Activated B cell treated with CpG ODN at 0.5 μM for 24 hours (primary cell): ENCODE measurements at regions of chr4 and their contacts with region 1.

Region 1: DNA sequence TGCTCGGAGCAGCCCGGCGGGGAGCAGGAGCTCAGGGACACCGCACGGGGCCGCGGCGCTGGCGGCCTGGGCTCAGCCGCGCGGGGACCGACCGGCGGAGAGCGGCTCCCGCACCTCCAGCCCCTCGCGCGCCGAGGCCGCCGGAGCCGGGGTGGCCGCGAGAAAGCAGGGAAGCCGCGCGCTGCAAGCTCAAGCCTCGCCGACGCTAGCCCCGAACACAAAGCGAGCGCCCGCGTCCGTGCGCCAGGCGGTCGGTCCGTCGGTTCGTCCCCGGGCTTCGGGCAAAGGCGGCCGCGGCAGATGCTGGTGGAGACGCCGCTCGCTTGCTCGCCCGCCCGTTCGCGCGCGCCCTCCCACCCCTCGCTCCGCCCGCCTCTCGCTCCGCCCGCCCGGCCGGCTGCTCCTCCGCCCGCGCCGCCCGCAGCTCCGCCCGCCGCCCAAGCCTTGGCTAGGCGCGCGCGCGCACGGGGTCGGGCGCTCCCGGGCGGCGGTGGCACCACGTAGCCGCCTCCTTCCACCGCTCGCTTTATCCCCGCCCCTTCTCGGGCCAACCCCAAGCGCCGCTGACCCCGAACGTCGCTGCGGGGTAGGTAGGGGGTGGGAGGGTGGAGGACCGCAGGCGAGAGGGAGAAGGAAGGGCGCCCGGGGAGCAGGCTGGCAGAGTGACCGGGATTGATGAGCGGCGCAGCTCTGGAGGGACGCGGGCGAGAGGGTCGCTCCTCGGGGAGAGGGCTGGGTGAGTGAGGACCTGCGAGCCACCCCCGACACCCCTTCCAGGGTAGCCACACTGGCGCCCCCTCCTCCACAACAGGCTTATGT is at the start of gene TSPAN5:
- DNase-seq: peak; percentile 78
- ATAC-seq: peak; percentile 86
- H3K4me3 Mint-ChIP-seq: peak within 1 kb of the TSS; percentile 92
- H3K27ac Mint-ChIP-seq: peak within 1 kb of the TSS; percentile 68
- H3K4me1 Mint-ChIP-seq: peaks cover 51% of the 10 kb centered on the region
- H3K27me3 Mint-ChIP-seq: peaks cover 7% of the 10 kb centered on the region
- CTCF ChIP-seq: no peak
- total RNA-seq, gene TSPAN5: 1.6 and 2.7 TPM in 2 replicates

Region 2: DNA sequence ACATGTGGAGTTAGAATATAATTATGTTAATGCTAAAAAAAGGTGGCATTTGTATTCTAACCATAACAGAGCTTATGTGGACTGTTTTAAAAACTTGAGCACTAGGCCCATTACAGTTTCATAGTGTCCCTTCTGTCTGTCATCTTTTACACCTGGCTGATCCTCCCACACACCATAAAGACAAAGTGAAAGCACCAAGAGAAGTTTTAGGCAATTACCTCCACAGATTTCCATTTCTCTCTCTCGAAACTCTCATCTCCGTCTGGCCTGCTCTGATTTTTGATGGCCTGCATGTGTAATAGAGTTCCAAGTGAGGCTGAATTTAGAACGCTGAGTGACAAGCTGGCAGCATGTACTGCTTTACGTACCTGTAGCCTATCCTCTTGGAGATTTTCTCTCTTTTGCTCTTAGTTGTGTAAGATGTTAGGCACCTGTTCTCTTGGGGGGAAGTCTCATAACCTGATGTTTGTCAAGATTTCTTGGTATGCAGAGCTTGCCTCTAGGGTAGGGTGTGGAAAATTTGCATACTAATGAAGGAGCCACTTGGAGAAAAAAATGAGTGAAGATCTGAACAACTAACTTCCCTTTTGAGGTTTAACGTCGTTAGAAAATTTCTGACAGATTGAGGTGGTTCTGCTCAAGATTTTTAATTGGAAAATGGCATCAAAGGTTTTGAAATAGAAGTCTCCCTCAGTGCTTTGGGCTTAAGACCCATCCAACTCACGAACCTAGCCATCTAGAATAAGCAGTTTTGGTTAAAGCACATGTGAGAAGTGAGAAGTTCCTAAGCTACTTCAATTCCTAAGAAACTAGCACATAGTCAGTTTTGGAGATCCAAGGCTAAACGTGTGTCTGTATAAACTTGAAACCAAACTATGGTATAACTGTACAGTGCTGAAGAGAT is 454.9 kb before region 1 on chr4:
- CTCF ChIA-PET with region 1: no interaction called
- POLR2A ChIA-PET with region 1: interaction called, 3 read pairs
- intact Hi-C with region 1: loop called (anchors 5 kb)
- DNase-seq: no peak
- ATAC-seq: peak; percentile 82
- H3K4me3 Mint-ChIP-seq: peak overlapping the region; percentile 62
- H3K27ac Mint-ChIP-seq: peak overlapping the region; percentile 86
- H3K4me1 Mint-ChIP-seq: peaks cover 37% of the 10 kb centered on the region
- H3K27me3 Mint-ChIP-seq: no peaks in the 10 kb centered on the region
- CTCF ChIP-seq: no peak

Region 3: DNA sequence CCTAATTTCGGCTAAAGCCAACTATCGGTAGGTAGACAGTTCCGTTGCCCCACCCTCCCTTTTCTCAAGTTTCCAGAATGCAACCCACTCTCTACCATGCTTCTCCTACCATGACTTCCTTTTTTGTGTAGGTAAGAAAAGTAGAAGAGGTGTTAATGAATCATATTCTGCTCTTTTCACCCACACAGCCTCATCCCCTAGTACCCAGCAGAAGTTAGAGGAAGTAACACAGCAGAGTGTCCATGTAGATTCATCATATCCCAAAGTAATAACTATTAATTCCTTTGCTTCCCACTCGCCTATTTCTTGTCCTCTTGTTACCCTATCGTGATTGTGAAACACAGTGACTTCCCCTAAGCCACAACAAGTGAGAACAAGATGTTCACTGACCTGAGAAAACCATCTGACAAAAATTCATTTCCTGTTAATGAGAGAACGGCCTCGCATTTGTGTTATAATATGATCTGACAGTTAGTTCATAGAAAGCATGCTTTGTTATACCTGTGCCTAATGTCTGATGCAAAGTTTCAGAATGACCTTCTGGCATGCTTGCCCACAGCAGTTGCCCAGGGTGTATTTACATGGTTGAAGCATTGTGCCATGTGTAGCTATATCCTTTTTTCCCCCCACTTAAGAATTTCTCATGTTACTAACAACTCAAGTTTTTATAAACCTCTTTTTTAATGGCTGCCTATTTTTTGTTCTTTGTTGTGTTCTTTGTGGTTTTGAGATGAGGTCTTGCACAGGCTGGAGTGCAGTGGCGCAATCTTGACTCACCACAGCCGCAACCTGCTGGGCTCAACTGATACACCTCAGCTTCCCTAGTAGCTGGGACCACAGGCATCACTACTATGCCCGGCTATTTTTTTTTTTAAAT is 211.8 kb before region 1 on chr4:
- CTCF ChIA-PET with region 1: no interaction called
- POLR2A ChIA-PET with region 1: no interaction called
- intact Hi-C with region 1: loop called (anchors 1 kb)
- DNase-seq: no peak
- ATAC-seq: peak; percentile 67
- H3K4me3 Mint-ChIP-seq: peak overlapping the region; percentile 72
- H3K27ac Mint-ChIP-seq: peak overlapping the region; percentile 87
- H3K4me1 Mint-ChIP-seq: peaks cover 41% of the 10 kb centered on the region
- H3K27me3 Mint-ChIP-seq: no peaks in the 10 kb centered on the region
- CTCF ChIP-seq: no peak

Region 4: DNA sequence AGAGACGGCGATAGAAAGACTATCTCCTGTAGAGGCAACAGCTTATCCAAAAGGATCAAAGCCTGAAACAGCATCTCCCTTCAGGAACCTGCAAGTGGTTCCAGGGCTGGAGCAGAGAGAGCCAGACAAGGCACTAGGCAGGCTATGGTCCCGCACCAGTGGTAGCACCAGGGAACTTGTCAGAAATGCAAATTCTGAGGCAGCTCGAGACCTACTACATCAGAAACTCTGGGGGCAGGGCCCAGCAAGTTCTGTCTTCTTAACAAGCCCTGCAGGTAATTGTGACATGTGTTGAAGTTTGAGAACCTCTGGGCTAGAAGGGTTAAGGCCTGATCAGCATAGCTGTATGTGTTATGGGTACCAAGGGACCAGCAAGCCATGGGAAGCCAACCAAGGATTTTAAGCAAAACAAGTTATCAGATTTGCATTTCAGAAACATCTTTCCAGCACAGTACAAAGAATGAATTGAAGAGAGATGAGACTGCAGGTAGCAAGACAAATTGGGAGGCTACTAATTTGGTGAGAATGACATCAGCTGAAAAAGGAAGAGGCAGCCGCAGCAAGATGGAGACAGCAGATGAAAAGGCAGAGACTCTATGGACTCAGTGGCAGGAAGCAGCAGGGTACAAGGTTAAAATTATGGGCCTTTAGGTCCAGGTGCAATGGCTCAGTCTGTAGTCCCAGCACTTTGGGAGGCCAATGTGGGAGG is 139.8 kb before region 1 on chr4:
- CTCF ChIA-PET with region 1: no interaction called
- POLR2A ChIA-PET with region 1: no interaction called
- intact Hi-C with region 1: loop called (anchors 2 kb)
- DNase-seq: peak; percentile 20
- ATAC-seq: peak; percentile 94
- H3K4me3 Mint-ChIP-seq: peak overlapping the region; percentile 32
- H3K27ac Mint-ChIP-seq: peak overlapping the region; percentile 51
- H3K4me1 Mint-ChIP-seq: peaks cover 20% of the 10 kb centered on the region
- H3K27me3 Mint-ChIP-seq: no peaks in the 10 kb centered on the region
- CTCF ChIP-seq: no peak

Region 5: DNA sequence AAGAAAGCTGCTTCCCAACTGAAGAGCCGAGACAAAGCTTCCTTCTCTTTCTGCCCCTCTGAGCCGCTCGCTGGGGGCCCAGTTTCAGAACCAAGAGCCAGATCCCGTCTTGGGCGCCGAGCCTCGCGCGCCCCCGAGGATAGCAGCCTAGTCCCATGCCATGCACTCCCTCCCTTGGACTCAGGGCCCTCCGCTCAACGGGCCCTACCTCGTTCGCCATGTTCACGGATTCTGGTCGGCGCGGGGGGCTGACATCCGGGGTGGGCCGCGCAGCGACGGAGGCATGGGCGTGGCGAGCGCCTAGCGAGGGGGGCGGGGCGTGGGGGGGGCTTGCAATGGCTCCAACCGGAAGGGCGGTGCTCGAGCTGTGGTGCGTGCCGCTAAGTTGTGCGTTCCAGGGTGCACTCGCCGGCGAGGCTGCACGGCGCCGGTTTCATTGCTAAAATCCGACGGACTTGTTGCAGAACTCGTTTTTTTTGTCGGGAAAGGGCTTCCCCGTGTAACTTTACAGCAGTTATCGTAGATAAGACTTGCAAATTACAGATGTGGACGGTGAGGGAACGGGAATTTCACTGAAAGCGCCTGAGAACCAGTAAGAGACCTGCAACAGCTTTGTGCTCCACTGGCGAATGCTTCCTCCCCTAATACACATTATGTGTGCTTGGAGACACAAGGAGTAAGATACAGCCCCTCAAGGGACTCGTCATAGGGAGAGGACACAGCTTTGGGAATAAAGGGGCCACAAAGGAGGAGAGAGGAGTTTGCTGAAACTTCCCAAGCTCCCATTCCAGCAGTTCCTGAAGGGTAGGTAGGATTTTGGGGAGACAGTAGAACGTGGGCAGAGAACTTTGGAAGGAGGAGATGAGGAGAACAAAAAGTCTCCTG is 430.2 kb after region 1 on chr4 and contains the start of gene ADH5:
- CTCF ChIA-PET with region 1: no interaction called
- POLR2A ChIA-PET with region 1: interaction called, 3 read pairs
- intact Hi-C with region 1: loop called (anchors 2 kb)
- DNase-seq: peak; percentile 77
- ATAC-seq: peak; percentile 95
- H3K4me3 Mint-ChIP-seq: peak within 1 kb of the TSS; percentile 99
- H3K27ac Mint-ChIP-seq: peak within 1 kb of the TSS; percentile 99
- H3K4me1 Mint-ChIP-seq: peaks cover 41% of the 10 kb centered on the region
- H3K27me3 Mint-ChIP-seq: no peaks in the 10 kb centered on the region
- CTCF ChIP-seq: no peak
- total RNA-seq, gene ADH5: 70.1 and 74.2 TPM in 2 replicates

Region 6: DNA sequence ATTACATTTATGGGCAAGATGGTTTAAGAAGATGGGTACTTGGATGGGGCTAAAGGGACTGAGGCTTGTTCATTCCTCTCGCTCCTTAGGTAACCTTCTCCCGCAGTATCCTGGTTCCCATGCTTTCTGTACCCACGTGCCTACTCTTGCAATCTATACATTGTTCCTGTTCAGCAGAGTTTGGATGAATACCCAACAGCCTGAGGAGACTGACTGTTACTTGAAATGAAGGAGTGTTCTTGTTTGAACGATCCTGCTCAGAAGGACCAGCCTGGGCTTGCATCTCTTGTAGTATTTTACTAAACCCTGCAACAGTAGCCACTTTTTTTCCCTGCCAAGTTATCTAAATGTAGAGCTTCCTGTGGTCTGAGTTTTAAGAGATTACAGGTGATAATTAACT is 594.2 kb after region 1 on chr4:
- CTCF ChIA-PET with region 1: no interaction called
- POLR2A ChIA-PET with region 1: no interaction called
- intact Hi-C with region 1: no loop called
- DNase-seq: no peak
- ATAC-seq: no peak
- H3K4me3 Mint-ChIP-seq: no peak overlapping the region
- H3K27ac Mint-ChIP-seq: no peak overlapping the region
- H3K4me1 Mint-ChIP-seq: no peaks in the 10 kb centered on the region
- H3K27me3 Mint-ChIP-seq: no peaks in the 10 kb centered on the region
- CTCF ChIP-seq: no peak

Region 7: GRCh38 chr4:99949034-99949998 is 1290.8 kb after region 1 on chr4:
- CTCF ChIA-PET with region 1: no interaction called
- POLR2A ChIA-PET with region 1: no interaction called
- intact Hi-C with region 1: loop called (anchors 5 kb)
- DNase-seq: peak; percentile 69
- ATAC-seq: peak; percentile 32
- H3K4me3 Mint-ChIP-seq: no peak overlapping the region
- H3K27ac Mint-ChIP-seq: no peak overlapping the region
- H3K4me1 Mint-ChIP-seq: peaks cover 31% of the 10 kb centered on the region
- H3K27me3 Mint-ChIP-seq: no peaks in the 10 kb centered on the region
- CTCF ChIP-seq: no peak